B cell (primary cell): ENCODE measurements at regions of chr5 and their contacts with region 1.

Region 1: DNA sequence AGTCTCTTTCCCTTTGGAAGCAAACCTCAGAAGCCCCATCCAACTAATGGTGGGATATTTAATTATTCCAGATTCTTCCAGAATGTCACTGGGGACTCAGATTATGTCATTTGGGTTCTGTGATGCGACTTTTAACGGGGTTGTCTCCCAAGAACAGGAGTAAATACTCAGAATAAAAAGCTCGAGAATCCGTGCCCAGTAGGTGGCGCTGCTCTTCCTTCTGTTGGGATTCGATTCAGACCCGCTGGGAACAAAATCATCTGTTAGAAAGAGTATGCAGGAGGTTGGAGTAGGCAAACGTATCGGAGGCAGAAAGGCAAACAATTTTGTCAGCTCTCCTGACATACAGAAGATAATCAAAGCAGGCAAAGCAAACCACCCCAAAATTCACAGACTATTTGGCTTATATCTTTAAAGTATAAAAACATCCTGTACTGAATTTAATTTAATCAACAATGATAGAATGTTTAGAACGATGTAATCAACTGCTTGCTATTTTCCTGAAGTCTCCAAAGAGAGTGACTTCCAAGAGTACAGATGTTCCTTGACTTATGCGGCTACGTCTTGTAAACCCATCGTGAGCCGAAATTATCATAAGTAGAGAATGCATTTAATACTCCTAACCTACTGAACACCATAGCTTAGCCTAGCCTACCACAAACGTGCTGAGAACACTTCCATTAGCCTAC is 169.8 kb upstream of the RAI14 start:
- DNase-seq: peak; percentile 68
- ATAC-seq: peak; percentile 43
- H3K4me3 ChIP-seq: no peak overlapping the region
- H3K4me3 Mint-ChIP-seq: no peak overlapping the region
- H3K27ac ChIP-seq: no peak overlapping the region
- H3K27ac Mint-ChIP-seq: no peak overlapping the region
- H3K4me1 ChIP-seq: no peaks in the 10 kb centered on the region
- H3K4me1 Mint-ChIP-seq: no peaks in the 10 kb centered on the region
- H3K27me3 ChIP-seq: peaks cover 0 to 4% (median 0%) of the 10 kb centered on the region in 4 experiments
- H3K27me3 Mint-ChIP-seq: peaks cover 5% of the 10 kb centered on the region
- CTCF ChIP-seq: peak; percentile 90

Region 2: DNA sequence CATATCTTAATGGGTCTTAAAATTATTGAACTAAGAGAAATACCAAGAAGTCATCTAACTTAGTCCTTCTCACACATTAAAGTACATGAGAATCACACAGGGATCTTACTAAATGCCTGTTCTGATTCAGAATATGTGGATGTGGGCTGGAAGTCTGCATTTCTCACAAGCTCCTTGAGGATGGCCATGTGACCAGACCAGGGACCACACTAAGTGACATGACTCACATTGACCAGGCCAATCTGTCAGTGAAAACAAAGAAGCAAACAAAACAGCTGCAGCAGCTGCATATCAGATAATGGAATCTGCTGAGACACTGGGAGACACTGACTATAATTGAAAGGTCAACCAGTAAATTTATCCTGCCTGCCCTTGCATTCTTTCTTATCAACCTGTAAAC is 705.0 kb before region 1 on chr5:
- CTCF ChIA-PET with region 1: no interaction called
- POLR2A ChIA-PET with region 1: no interaction called
- intact Hi-C with region 1: no loop called
- DNase-seq: no peak
- ATAC-seq: no peak
- H3K4me3 ChIP-seq: no peak overlapping the region
- H3K4me3 Mint-ChIP-seq: no peak overlapping the region
- H3K27ac ChIP-seq: no peak overlapping the region
- H3K27ac Mint-ChIP-seq: no peak overlapping the region
- H3K4me1 ChIP-seq: no peaks in the 10 kb centered on the region
- H3K4me1 Mint-ChIP-seq: no peaks in the 10 kb centered on the region
- H3K27me3 ChIP-seq: no peaks in the 10 kb centered on the region
- H3K27me3 Mint-ChIP-seq: peaks cover 6% of the 10 kb centered on the region
- CTCF ChIP-seq: no peak

Region 3: DNA sequence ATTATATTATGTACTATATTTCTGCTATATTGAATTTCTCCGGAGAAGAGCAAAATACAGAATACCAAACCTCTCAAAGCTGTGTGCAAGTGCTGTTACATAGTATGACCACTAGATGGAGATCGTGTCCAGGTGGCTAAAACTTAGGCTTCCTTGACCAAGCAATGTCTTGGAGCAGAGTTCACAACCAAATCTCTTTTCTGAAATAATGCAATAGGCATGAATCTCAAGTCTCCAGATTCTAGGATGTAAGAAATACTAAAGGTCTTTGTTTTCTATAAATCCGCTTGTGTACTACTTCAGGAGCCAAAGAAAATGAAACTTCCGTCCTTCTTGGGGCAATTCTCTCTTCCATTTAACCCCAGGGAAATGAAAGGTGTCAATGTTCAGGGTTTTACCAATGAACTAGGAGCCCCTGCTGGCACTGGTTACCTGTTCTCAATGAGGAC is 11.7 kb before region 1 on chr5:
- CTCF ChIA-PET with region 1: interaction called, 53 read pairs
- POLR2A ChIA-PET with region 1: no interaction called
- intact Hi-C with region 1: no loop called
- DNase-seq: peak; percentile 50
- ATAC-seq: peak; percentile 69
- H3K4me3 ChIP-seq: no peak overlapping the region
- H3K4me3 Mint-ChIP-seq: no peak overlapping the region
- H3K27ac ChIP-seq: no peak overlapping the region
- H3K27ac Mint-ChIP-seq: no peak overlapping the region
- H3K4me1 ChIP-seq: no peaks in the 10 kb centered on the region
- H3K4me1 Mint-ChIP-seq: peaks cover 4% of the 10 kb centered on the region
- H3K27me3 ChIP-seq: peaks cover 0 to 5% (median 0%) of the 10 kb centered on the region in 4 experiments
- H3K27me3 Mint-ChIP-seq: peaks cover 21% of the 10 kb centered on the region
- CTCF ChIP-seq: peak; percentile 98

Region 4: GRCh38 chr5:34499001-34499734 is 12.9 kb after region 1 on chr5:
- CTCF ChIA-PET with region 1: interaction called, 24 read pairs
- POLR2A ChIA-PET with region 1: no interaction called
- intact Hi-C with region 1: no loop called
- DNase-seq: peak; percentile 38
- ATAC-seq: peak; percentile 72
- H3K4me3 ChIP-seq: no peak overlapping the region
- H3K4me3 Mint-ChIP-seq: peak overlapping the region; percentile 42
- H3K27ac ChIP-seq: no peak overlapping the region
- H3K27ac Mint-ChIP-seq: peak overlapping the region; percentile 77
- H3K4me1 ChIP-seq: peaks cover 4 to 20% of the 10 kb centered on the region in 2 donors
- H3K4me1 Mint-ChIP-seq: peaks cover 21% of the 10 kb centered on the region
- H3K27me3 ChIP-seq: no peaks in the 10 kb centered on the region
- H3K27me3 Mint-ChIP-seq: no peaks in the 10 kb centered on the region
- CTCF ChIP-seq: no peak

Region 5: GRCh38 chr5:34522599-34523386 is 36.5 kb after region 1 on chr5:
- CTCF ChIA-PET with region 1: interaction called, 9 read pairs
- POLR2A ChIA-PET with region 1: no interaction called
- intact Hi-C with region 1: loop called (anchors 5 kb)
- DNase-seq: peak; percentile 71
- ATAC-seq: peak; percentile 63
- H3K4me3 ChIP-seq: no peak overlapping the region
- H3K4me3 Mint-ChIP-seq: no peak overlapping the region
- H3K27ac ChIP-seq: no peak overlapping the region
- H3K27ac Mint-ChIP-seq: no peak overlapping the region
- H3K4me1 ChIP-seq: peaks cover 0 to 3% of the 10 kb centered on the region in 2 donors
- H3K4me1 Mint-ChIP-seq: no peaks in the 10 kb centered on the region
- H3K27me3 ChIP-seq: no peaks in the 10 kb centered on the region
- H3K27me3 Mint-ChIP-seq: peaks cover 5% of the 10 kb centered on the region
- CTCF ChIP-seq: peak; percentile 83

Region 6: GRCh38 chr5:34695275-34696027 is 209.1 kb after region 1 on chr5:
- CTCF ChIA-PET with region 1: no interaction called
- POLR2A ChIA-PET with region 1: no interaction called
- intact Hi-C with region 1: no loop called
- DNase-seq: peak; percentile 8
- ATAC-seq: peak; percentile 56
- H3K4me3 ChIP-seq: no peak overlapping the region
- H3K4me3 Mint-ChIP-seq: no peak overlapping the region
- H3K27ac ChIP-seq: no peak overlapping the region
- H3K27ac Mint-ChIP-seq: no peak overlapping the region
- H3K4me1 ChIP-seq: peaks cover 0 to 2% of the 10 kb centered on the region in 2 donors
- H3K4me1 Mint-ChIP-seq: peaks cover 10% of the 10 kb centered on the region
- H3K27me3 ChIP-seq: no peaks in the 10 kb centered on the region
- H3K27me3 Mint-ChIP-seq: no peaks in the 10 kb centered on the region
- CTCF ChIP-seq: no peak

Region 7: DNA sequence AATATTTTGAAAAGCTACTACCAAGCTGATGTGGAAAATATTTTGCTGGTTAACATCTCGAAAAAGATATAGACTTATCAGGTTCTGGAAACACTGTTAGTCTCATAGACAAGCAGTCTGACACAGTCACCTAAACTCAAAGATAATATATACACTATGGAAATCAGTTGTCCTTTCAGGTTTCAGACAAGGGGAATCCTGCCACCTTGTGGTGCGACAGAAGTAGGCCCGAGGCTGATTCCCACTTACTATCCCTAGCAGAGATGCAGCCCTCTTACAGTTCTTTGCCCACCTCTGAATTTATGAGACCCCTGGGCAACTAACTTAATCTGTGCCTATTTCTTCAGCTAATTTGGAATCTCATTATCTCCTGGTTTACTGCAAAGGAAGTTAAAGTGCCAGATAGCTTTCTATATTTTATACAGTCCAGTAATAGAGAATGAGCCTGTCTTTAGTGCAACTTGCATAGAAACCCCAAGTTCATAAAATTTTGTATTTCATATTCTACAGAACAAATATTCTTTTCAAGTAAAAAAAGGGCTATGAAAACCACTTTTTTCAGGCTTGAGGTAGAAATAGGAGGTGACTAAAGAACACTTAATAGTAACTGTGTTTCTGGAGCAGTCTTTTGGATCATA is 412.1 kb after region 1 on chr5:
- CTCF ChIA-PET with region 1: interaction called, 37 read pairs
- POLR2A ChIA-PET with region 1: no interaction called
- intact Hi-C with region 1: loop called (anchors 1 kb)
- DNase-seq: peak; percentile 73
- ATAC-seq: peak; percentile 73
- H3K4me3 ChIP-seq: no peak overlapping the region
- H3K4me3 Mint-ChIP-seq: no peak overlapping the region
- H3K27ac ChIP-seq: no peak overlapping the region
- H3K27ac Mint-ChIP-seq: no peak overlapping the region
- H3K4me1 ChIP-seq: no peaks in the 10 kb centered on the region
- H3K4me1 Mint-ChIP-seq: no peaks in the 10 kb centered on the region
- H3K27me3 ChIP-seq: no peaks in the 10 kb centered on the region
- H3K27me3 Mint-ChIP-seq: no peaks in the 10 kb centered on the region
- CTCF ChIP-seq: peak; percentile 92

Region 8: DNA sequence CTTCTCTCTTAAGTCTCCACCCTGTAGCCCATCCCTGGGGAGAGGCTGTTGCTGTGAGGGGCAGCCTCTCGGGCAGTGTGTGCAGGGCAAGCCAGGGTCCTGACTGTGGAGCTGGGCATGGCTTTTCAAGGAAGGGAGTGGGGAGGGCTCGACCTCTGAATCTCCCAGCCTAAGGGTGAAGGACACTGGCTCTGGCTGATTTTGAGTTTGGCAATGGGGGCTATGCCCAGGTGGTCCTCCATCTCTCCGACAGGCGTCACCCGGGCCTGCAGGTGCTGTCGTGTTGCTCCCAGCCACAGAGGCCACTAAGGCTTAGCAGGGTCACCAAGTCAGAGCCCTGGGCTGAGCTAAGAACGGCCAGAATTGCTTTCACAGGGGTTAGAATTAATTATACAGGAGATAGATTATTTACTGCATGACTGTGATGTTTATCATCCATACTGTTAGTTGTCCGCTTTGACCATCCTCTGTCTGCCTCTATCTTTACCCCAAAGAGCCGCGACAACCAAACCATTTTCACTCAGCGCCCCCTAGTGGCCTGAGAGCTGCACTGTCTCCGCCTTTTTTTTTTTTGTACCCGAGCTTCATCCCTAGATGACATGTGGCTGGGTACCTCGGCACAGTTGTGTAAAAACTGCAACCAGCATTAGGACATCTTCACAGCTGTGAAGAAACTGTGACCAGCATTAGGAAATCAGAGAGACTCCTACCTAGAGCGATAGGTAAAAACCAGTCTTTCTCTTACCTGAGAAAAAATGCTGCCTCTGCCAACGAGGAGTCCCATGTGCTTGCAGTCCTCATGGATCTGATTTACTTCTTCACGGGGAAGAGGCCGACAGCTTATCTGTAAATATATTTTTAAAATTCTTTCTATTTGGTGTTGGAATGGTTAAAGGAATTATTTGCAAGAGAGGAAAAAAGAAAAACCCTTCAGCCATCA is 517.0 kb after region 1 on chr5:
- CTCF ChIA-PET with region 1: interaction called, 10 read pairs
- POLR2A ChIA-PET with region 1: no interaction called
- intact Hi-C with region 1: no loop called
- DNase-seq: peak; percentile 54
- ATAC-seq: peak; percentile 28
- H3K4me3 ChIP-seq: no peak overlapping the region
- H3K4me3 Mint-ChIP-seq: no peak overlapping the region
- H3K27ac ChIP-seq: no peak overlapping the region
- H3K27ac Mint-ChIP-seq: no peak overlapping the region
- H3K4me1 ChIP-seq: no peaks in the 10 kb centered on the region
- H3K4me1 Mint-ChIP-seq: no peaks in the 10 kb centered on the region
- H3K27me3 ChIP-seq: peaks cover 0 to 11% (median 5%) of the 10 kb centered on the region in 4 experiments
- H3K27me3 Mint-ChIP-seq: peaks cover 35% of the 10 kb centered on the region
- CTCF ChIP-seq: peak; percentile 84

Region 9: DNA sequence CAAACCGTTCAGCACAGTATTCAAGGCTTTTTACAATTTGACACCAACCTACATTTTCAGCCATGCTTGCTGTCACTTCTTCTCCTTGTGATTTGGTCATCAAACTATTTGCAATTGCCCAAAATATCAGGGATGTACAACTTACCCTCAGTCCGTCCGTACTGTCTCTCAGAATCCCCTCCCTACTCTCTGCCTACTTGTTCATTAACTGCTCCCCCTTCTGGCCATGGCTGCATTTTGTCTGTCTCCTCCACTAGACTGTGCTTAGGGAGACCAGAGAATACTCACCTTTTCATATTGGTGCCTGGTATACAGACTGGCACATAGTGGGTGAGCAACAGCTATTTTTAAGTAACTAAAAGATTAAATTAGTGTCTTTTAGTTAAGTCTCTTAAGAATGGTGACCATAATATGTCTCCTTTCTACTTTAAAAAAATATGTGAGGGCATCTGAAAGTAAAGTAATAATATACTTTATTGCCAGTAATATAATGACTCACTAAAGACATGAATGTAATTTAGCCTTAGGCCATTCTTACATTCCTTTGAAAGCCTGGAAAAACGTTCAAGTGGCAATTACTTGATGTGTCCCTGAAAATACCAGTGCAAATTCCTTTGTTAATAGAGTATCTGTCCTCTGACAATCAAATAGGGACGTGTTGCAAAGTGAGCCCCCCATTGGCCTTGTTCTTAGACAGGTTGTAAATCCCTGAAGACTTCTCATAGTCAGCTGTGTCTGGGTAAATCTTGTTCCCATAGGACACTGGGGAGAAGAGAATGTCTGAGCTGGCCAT is 716.2 kb after region 1 on chr5:
- CTCF ChIA-PET with region 1: no interaction called
- POLR2A ChIA-PET with region 1: no interaction called
- intact Hi-C with region 1: loop called (anchors 5 kb)
- DNase-seq: peak; percentile 68
- ATAC-seq: peak; percentile 74
- H3K4me3 ChIP-seq: no peak overlapping the region
- H3K4me3 Mint-ChIP-seq: no peak overlapping the region
- H3K27ac ChIP-seq: no peak overlapping the region
- H3K27ac Mint-ChIP-seq: no peak overlapping the region
- H3K4me1 ChIP-seq: no peaks in the 10 kb centered on the region
- H3K4me1 Mint-ChIP-seq: peaks cover 2% of the 10 kb centered on the region
- H3K27me3 ChIP-seq: peaks cover 0 to 5% (median 3%) of the 10 kb centered on the region in 4 experiments
- H3K27me3 Mint-ChIP-seq: peaks cover 24% of the 10 kb centered on the region
- CTCF ChIP-seq: peak; percentile 74

Region 10: DNA sequence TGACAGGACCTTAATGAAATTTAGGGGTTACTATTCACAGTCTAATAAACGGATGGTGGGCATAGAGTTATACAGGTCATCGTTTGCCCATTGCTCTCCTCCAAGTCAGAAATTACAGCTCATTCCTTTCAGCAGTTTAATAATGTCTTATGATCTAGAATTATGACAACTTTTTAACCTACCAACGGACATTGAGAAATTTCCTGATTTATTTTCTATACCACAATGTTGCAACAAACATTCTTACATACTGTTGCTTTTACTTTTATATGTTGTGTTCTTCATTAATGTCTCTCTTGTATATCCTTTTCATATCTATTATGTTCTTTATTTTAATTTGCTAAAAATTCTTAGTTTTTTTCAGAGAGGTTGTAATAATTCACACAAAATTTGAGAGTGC is 896.7 kb after region 1 on chr5:
- CTCF ChIA-PET with region 1: no interaction called
- POLR2A ChIA-PET with region 1: no interaction called
- intact Hi-C with region 1: no loop called
- DNase-seq: no peak
- ATAC-seq: no peak
- H3K4me3 ChIP-seq: no peak overlapping the region
- H3K4me3 Mint-ChIP-seq: no peak overlapping the region
- H3K27ac ChIP-seq: no peak overlapping the region
- H3K27ac Mint-ChIP-seq: no peak overlapping the region
- H3K4me1 ChIP-seq: no peaks in the 10 kb centered on the region
- H3K4me1 Mint-ChIP-seq: no peaks in the 10 kb centered on the region
- H3K27me3 ChIP-seq: no peaks in the 10 kb centered on the region
- H3K27me3 Mint-ChIP-seq: no peaks in the 10 kb centered on the region
- CTCF ChIP-seq: no peak

Region 11: DNA sequence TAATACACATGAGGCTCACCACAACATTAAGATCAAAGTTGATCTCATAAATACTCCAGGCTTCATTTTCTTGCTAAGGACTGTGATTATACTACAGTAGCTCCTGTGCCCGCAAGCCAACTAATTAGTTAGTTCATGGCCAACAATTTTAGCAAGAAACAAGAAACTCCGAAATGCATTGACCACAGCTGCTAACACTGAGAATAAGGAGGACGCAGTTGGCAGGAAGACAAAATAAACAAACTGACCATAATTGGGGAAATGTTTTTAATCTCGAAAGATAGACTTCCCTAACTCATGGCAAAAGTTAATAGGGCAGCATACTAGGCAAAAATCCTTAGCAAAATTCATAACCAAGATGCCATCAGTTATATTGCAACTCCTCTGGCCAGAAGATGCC is 1015.9 kb after region 1 on chr5:
- CTCF ChIA-PET with region 1: no interaction called
- POLR2A ChIA-PET with region 1: no interaction called
- intact Hi-C with region 1: no loop called
- DNase-seq: no peak
- ATAC-seq: no peak
- H3K4me3 ChIP-seq: no peak overlapping the region
- H3K4me3 Mint-ChIP-seq: no peak overlapping the region
- H3K27ac ChIP-seq: no peak overlapping the region
- H3K27ac Mint-ChIP-seq: no peak overlapping the region
- H3K4me1 ChIP-seq: no peaks in the 10 kb centered on the region
- H3K4me1 Mint-ChIP-seq: no peaks in the 10 kb centered on the region
- H3K27me3 ChIP-seq: no peaks in the 10 kb centered on the region
- H3K27me3 Mint-ChIP-seq: no peaks in the 10 kb centered on the region
- CTCF ChIP-seq: no peak